ENCODE measurements at regions of chr12 and their contacts with region 1.

Region 1: GRCh38 chr12:109719236-109720022 is 5.8 kb downstream of the FAM222A start:
- DNase-seq: no peak
- H3K4me3 ChIP-seq: no peak overlapping the region
- H3K27ac ChIP-seq: no peak overlapping the region
- H3K4me1 ChIP-seq: peaks cover 3 to 17% of the 10 kb centered on the region in 2 donors
- H3K27me3 ChIP-seq: peaks cover 19% of the 10 kb centered on the region
- CTCF ChIP-seq: no peak

Region 2: DNA sequence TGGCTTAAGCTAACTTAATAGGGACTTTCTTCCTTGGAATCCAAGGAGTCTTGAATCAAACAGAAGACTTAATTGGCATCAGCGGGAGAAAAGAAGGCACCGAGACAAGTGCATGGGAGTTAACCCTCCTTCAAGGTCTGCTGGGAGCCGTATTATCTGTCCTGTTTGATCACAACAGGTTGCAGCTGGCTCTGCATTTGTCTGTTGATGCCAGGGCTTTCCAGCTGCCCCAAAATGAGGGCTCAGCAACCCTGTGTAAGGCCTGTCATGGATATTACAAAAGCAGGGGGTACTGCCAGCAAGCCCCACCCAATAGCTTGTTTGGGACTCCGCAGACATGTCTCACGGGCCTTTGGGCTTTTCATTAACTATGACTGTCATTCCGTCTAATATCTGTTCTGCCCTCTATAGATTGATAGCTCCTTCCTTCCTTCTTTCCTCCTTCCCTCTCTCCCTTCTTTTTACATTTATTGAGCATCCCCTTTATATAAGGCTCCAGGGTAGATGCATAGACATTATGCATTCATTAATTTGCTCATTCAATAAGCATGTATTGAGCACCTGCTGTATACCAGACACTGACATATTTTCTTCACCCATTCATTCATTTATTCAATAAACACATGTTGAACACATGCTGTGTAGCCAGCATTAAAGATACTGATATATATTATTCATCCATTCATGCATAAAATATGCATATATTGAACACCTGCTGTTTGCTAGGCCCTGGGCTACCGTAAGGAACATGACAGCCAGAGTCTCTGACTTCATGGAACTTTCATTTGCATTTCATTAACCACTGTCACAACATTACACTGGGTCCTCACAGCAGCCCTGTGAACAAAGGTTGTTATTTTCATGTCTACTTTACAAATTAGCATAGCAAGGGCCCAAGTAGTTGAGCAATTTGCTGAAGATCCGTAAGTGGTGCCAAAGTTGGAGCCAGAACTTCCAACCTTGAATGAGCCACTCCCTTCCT is 754.8 kb before region 1 on chr12:
- intact Hi-C with region 1: no loop called
- DNase-seq: no peak
- H3K4me3 ChIP-seq: no peak overlapping the region
- H3K27ac ChIP-seq: no peak overlapping the region
- H3K4me1 ChIP-seq: no peaks in the 10 kb centered on the region
- H3K27me3 ChIP-seq: no peaks in the 10 kb centered on the region
- CTCF ChIP-seq: no peak

Region 3: GRCh38 chr12:109435428-109436187 is 283.8 kb before region 1 on chr12:
- intact Hi-C with region 1: loop called (anchors 5 kb)
- DNase-seq: no peak
- H3K4me3 ChIP-seq: no peak overlapping the region
- H3K27ac ChIP-seq: no peak overlapping the region
- H3K4me1 ChIP-seq: peaks cover 0 to 3% of the 10 kb centered on the region in 2 donors
- H3K27me3 ChIP-seq: no peaks in the 10 kb centered on the region
- CTCF ChIP-seq: no peak

Measured in ascending aorta (tissue), 2 donors.